ENCODE measurements at regions of chr4 and their contacts with region 1.

Region 1: GRCh38 chr4:142379277-142380057 is 466.6 kb downstream of the INPP4B start:
- DNase-seq: no peak
- H3K4me3 Mint-ChIP-seq: no peak overlapping the region
- H3K27ac Mint-ChIP-seq: peak overlapping the region; percentile 77
- H3K4me1 Mint-ChIP-seq: peaks cover 51% of the 10 kb centered on the region
- H3K27me3 Mint-ChIP-seq: no peaks in the 10 kb centered on the region

Region 2: GRCh38 chr4:142155347-142155746 is 224.1 kb before region 1 on chr4:
- intact Hi-C with region 1: no loop called
- DNase-seq: no peak
- H3K4me3 Mint-ChIP-seq: no peak overlapping the region
- H3K27ac Mint-ChIP-seq: no peak overlapping the region
- H3K4me1 Mint-ChIP-seq: no peaks in the 10 kb centered on the region
- H3K27me3 Mint-ChIP-seq: no peaks in the 10 kb centered on the region

Region 3: DNA sequence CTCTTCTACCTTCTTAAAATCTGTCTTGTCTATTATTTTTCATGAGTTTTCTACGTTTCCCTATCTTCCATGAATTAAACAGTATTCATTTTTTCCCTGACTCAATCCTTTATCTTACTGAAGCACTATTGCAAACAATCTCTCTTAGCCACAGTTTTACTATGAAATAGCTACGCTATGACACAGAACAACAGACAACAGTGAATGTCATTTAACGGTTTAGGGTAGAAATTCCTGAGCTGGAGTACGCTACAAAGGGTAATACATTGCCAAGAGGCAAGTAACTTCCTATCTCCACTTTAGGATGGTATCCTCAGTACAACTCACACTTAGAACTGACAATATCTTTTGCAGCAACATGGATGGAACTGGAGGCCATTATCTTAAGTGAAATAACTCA is 85.9 kb before region 1 on chr4:
- intact Hi-C with region 1: loop called (anchors 5 kb)
- DNase-seq: no peak
- H3K4me3 Mint-ChIP-seq: no peak overlapping the region
- H3K27ac Mint-ChIP-seq: no peak overlapping the region
- H3K4me1 Mint-ChIP-seq: peaks cover 20% of the 10 kb centered on the region
- H3K27me3 Mint-ChIP-seq: no peaks in the 10 kb centered on the region

Region 4: GRCh38 chr4:142366769-142367181 is 12.7 kb before region 1 on chr4:
- intact Hi-C with region 1: loop called (anchors 1 kb)
- DNase-seq: no peak
- H3K4me3 Mint-ChIP-seq: no peak overlapping the region
- H3K27ac Mint-ChIP-seq: peak overlapping the region; percentile 31
- H3K4me1 Mint-ChIP-seq: peaks cover 51% of the 10 kb centered on the region
- H3K27me3 Mint-ChIP-seq: no peaks in the 10 kb centered on the region

Region 5: DNA sequence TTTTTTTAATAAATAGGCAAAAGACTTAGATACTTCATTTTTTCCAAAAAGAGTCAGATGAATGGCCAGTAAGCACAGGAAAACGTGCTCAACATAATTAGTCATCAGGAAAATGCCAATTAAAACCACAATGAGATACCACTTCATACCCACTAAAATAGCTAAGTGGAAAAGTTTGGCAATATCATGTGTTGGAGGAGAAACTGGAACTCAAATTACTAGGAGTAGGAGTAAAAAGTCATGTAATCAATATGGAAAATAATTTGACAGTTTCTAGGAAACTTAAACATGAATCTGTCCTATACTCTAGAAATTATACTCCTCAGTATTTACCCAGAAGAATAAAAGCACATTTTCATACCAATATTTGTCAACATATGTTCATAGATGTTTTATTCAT is 16.8 kb after region 1 on chr4:
- intact Hi-C with region 1: loop called (anchors 1 kb)
- DNase-seq: no peak
- H3K4me3 Mint-ChIP-seq: peak overlapping the region; percentile 65
- H3K27ac Mint-ChIP-seq: peak overlapping the region; percentile 88
- H3K4me1 Mint-ChIP-seq: peaks cover 51% of the 10 kb centered on the region
- H3K27me3 Mint-ChIP-seq: no peaks in the 10 kb centered on the region

Region 6: DNA sequence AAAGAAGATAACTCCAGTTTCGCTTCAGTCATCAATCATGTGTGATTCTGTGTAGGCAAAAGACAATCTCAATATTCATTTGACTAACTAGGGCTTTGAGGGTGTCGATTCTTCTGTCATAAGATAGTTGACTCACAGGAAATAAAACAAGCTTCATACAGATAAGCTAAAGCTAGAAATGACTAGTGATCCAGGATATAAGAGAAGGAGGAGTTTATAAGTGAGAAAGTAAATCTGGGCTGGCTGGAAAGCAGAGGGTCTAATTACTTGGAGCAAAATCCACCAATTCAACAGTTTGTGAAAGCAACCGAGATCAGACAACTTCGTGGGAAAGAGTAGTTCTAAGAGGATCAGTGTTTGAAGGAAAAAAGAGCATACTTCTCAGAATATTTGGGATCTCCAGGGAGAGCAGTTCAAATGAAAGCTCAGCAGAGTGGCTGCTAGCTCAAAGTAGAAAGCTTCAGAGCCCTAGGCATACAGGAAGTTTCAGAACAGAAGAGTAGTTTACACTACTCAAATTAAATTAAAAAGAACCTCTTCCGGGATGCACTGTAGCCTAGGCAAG is 37.3 kb after region 1 on chr4:
- intact Hi-C with region 1: loop called (anchors 1 kb)
- DNase-seq: peak; percentile 75
- H3K4me3 Mint-ChIP-seq: peak overlapping the region; percentile 62
- H3K27ac Mint-ChIP-seq: peak overlapping the region; percentile 95
- H3K4me1 Mint-ChIP-seq: peaks cover 36% of the 10 kb centered on the region
- H3K27me3 Mint-ChIP-seq: no peaks in the 10 kb centered on the region

Measured in activated CD4-positive, alpha-beta T cell treated with anti-CD3 and anti-CD28 coated beads, Interleukin-2, amount 10 ng/mL, durations not matched to agents 24 days and 14 days (primary cell).